H1 (cell line): ENCODE measurements at regions of chr1 and their contacts with region 1.

Region 1: GRCh38 chr1:68120136-68120791 is 69.8 kb upstream of the DIRAS3 start:
- DNase-seq: peak in 1 of 2 experiments; percentile 75
- H3K4me3 ChIP-seq: no peak overlapping the region
- H3K27ac ChIP-seq: no peak overlapping the region
- H3K4me1 ChIP-seq: peaks cover 0 to 2% (median 0%) of the 10 kb centered on the region in 4 experiments; a peak in 1 of 7 replicates
- H3K27me3 ChIP-seq: no peaks in the 10 kb centered on the region
- CTCF ChIP-seq: peak in 2 of 3 experiments; percentile 86 to 93; a peak in 3 of 4 replicates
- EP300 ChIP-seq: no peak
- POLR2A ChIP-seq: no peak
- RAD21 ChIP-seq: peak; percentile 95 to 99

Region 2: DNA sequence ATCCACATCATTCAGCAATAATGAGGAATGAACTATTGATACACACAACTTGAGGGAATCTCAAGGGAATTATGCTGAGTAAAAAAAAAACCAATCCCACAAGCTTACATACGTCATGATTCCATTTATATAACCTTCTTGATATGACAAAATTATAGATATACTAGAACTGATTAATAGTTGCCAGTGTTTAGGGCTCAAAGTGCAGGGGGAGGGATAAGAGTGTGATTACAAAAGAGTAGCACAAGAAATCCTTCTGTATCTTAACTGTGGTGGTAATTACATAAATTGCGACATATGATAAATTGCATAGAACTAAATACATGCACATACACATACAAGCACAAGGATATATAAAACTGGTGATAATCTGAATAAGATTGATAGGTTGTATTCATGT is 83.3 kb before region 1 on chr1:
- CTCF ChIA-PET with region 1: no interaction called
- POLR2A ChIA-PET with region 1: no interaction called
- DNase-seq: no peak
- H3K4me3 ChIP-seq: no peak overlapping the region
- H3K27ac ChIP-seq: no peak overlapping the region
- H3K4me1 ChIP-seq: no peaks in the 10 kb centered on the region
- H3K27me3 ChIP-seq: no peaks in the 10 kb centered on the region
- CTCF ChIP-seq: no peak
- EP300 ChIP-seq: no peak
- POLR2A ChIP-seq: no peak
- RAD21 ChIP-seq: no peak

Region 3: GRCh38 chr1:68103884-68104554 is 16.2 kb before region 1 on chr1:
- CTCF ChIA-PET with region 1: interaction called, 25 read pairs
- POLR2A ChIA-PET with region 1: no interaction called
- DNase-seq: no peak
- H3K4me3 ChIP-seq: no peak overlapping the region
- H3K27ac ChIP-seq: no peak overlapping the region
- H3K4me1 ChIP-seq: peaks cover 0 to 2% (median under 1%) of the 10 kb centered on the region in 4 experiments; a peak in 2 of 7 replicates
- H3K27me3 ChIP-seq: no peaks in the 10 kb centered on the region
- CTCF ChIP-seq: no peak
- EP300 ChIP-seq: no peak
- POLR2A ChIP-seq: no peak
- RAD21 ChIP-seq: no peak

Region 4: GRCh38 chr1:68162761-68163160 is 42.5 kb after region 1 on chr1:
- CTCF ChIA-PET with region 1: interaction called, 24 read pairs
- POLR2A ChIA-PET with region 1: no interaction called
- DNase-seq: peak in 1 of 2 experiments; percentile 76
- H3K4me3 ChIP-seq: no peak overlapping the region
- H3K27ac ChIP-seq: no peak overlapping the region
- H3K4me1 ChIP-seq: no peaks in the 10 kb centered on the region
- H3K27me3 ChIP-seq: no peaks in the 10 kb centered on the region
- CTCF ChIP-seq: peak; percentile 56 to 76 (median 70)
- EP300 ChIP-seq: no peak
- POLR2A ChIP-seq: no peak
- RAD21 ChIP-seq: peak; percentile 59 to 68

Region 5: GRCh38 chr1:68225781-68226180 is 105.5 kb after region 1 on chr1:
- CTCF ChIA-PET with region 1: interaction called, 18 read pairs
- POLR2A ChIA-PET with region 1: no interaction called
- DNase-seq: no peak
- H3K4me3 ChIP-seq: no peak overlapping the region
- H3K27ac ChIP-seq: no peak overlapping the region
- H3K4me1 ChIP-seq: peaks cover 0 to 7% (median 1%) of the 10 kb centered on the region in 4 experiments; a peak in 5 of 7 replicates
- H3K27me3 ChIP-seq: peaks cover 17 to 34% (median 30%) of the 10 kb centered on the region in 4 experiments
- CTCF ChIP-seq: no peak
- EP300 ChIP-seq: no peak
- POLR2A ChIP-seq: no peak
- RAD21 ChIP-seq: no peak

Region 6: DNA sequence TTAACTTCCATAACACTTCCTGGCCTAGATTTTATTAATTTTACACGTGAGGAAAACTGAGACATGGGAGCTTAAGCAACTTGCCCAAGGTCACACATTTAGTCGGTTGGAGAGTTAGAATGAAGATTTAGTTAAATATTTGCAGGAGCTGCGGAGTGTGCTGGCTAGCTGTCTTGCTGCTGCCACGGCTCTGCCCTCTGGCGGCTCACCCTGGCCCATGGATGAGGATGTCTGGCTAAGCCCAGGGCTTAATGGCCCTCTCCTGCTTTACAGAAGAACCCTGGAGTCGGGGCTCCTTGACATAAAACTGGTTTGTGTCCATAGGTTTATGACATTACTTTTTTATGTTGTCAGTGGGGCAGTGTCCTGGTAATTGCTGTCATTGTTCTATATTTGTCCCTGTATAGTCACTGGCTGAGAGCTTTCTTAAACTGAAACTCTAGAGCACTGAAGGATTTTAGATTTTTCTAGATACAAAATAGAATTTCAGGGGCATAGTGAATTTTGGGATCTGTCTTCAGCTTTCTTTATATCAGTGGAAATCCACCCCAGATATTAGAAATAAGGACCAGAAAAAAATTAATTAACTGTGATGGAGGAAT is 200.9 kb after region 1 on chr1:
- CTCF ChIA-PET with region 1: interaction called, 154 read pairs
- POLR2A ChIA-PET with region 1: no interaction called
- DNase-seq: peak; percentile 23 to 56
- H3K4me3 ChIP-seq: no peak overlapping the region
- H3K27ac ChIP-seq: no peak overlapping the region
- H3K4me1 ChIP-seq: peaks cover 0 to 5% (median 0%) of the 10 kb centered on the region in 4 experiments; a peak in 1 of 7 replicates
- H3K27me3 ChIP-seq: no peaks in the 10 kb centered on the region; a peak in 1 of 7 replicates
- CTCF ChIP-seq: peak; percentile 72 to 85 (median 78)
- EP300 ChIP-seq: no peak
- POLR2A ChIP-seq: no peak
- RAD21 ChIP-seq: peak; percentile 79 to 82

Region 7: DNA sequence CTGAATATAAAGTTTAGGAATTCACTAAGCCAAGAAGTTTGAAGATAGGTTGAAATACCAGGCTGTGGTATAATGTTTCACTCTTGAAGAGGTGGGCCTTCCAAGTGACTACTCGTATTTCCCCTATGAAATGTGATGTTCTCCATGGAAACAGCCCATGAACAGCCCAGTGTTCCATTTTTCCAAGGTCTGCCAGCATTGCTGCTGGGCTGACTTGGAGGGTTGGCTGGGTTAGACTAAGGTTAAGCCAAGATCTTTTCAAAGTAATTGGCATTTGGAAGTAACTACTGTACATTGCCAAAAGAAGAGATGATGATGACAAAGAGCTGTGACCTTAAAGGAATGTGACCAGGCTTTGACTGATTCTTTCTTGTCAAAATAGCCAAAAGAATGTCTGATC is 255.7 kb after region 1 on chr1:
- CTCF ChIA-PET with region 1: interaction called, 11 read pairs
- POLR2A ChIA-PET with region 1: no interaction called
- DNase-seq: no peak
- H3K4me3 ChIP-seq: no peak overlapping the region
- H3K27ac ChIP-seq: no peak overlapping the region
- H3K4me1 ChIP-seq: no peaks in the 10 kb centered on the region
- H3K27me3 ChIP-seq: no peaks in the 10 kb centered on the region
- CTCF ChIP-seq: no peak
- EP300 ChIP-seq: no peak
- POLR2A ChIP-seq: no peak
- RAD21 ChIP-seq: no peak